ENCODE measurements at regions of chr21 and their contacts with region 1.

Region 1: DNA sequence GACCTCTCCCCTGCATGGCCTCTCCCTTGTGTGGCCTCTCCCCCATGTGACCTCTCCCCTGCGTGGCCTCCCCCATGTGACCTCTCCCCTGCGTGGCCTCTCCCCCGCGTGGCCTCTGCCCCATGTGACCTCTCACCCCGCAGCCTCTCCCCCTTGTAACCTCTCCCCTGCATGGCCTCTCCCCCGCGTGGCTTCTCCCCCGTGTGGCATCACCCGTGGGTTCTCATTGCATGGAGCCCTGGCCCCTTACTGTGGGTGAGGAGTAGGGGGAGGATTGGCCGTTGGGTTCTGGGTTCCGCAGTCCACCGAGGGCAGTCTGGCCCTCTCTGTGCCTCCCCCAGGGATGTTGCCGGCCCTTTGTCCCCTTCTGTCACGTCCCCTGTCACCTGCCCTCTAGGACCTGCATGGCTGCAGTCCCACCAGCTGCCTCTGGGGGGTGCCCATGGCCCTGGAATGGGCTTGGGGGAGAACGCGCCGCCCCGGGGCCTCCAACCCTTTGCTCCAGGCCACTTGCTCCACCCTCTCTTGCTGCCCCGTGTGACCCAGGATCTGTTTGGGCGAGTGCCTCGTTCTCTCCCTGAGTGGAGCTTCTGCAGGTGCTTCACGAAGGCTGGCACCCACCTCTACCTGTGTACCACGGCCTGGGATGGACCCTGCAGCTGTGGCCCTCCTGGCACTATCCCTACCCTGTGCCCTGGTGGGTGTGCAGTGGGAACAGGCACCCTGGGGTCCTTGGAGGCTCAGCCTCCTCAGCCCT is 21.3 kb downstream of the RRP1 start:
- DNase-seq: peak; percentile 80 to 93 (median 86)
- ATAC-seq: peak; percentile 96
- H3K4me3 ChIP-seq: peak overlapping the region; percentile 22
- H3K4me3 Mint-ChIP-seq: no peak overlapping the region
- H3K27ac ChIP-seq: no peak overlapping the region
- H3K27ac Mint-ChIP-seq: peak overlapping the region; percentile 37
- H3K4me1 ChIP-seq: peaks cover 21% of the 10 kb centered on the region
- H3K4me1 Mint-ChIP-seq: peaks cover 13% of the 10 kb centered on the region
- H3K27me3 ChIP-seq: no peaks in the 10 kb centered on the region
- H3K27me3 Mint-ChIP-seq: no peaks in the 10 kb centered on the region
- CTCF ChIP-seq: peak; percentile 87

Region 2: DNA sequence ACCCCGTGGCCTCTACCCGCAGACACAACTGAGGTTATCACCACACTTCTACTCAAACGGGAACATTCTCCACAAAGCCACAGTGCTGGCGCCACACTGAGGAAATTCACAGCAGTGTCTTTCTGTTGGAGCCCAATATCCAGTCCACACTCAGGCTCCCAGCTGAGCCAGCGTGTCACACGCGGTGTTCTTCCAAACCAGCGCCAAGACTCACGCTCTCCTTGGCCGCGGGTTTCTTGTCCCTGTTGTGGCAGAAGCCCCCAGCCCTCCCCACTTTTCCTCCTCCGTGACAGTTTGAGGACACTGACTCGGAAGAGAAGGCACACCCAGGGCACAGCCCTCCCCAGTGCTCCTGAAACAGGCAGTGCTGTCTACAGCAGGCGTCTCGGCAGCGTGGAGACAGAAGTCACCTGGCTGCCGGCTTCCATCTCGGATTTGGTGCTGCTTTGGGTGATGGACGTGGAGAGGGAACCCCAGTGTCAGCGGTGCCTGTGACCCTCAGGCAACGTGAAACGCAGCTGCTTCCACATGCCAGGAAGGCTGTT is 19.0 kb after region 1 on chr21:
- CTCF ChIA-PET with region 1: no interaction called
- POLR2A ChIA-PET with region 1: no interaction called
- intact Hi-C with region 1: no loop called
- DNase-seq: no peak
- ATAC-seq: no peak
- H3K4me3 ChIP-seq: no peak overlapping the region
- H3K4me3 Mint-ChIP-seq: no peak overlapping the region
- H3K27ac ChIP-seq: no peak overlapping the region
- H3K27ac Mint-ChIP-seq: no peak overlapping the region
- H3K4me1 ChIP-seq: no peaks in the 10 kb centered on the region
- H3K4me1 Mint-ChIP-seq: no peaks in the 10 kb centered on the region
- H3K27me3 ChIP-seq: peaks cover 0 to 11% of the 10 kb centered on the region in 2 experiments
- H3K27me3 Mint-ChIP-seq: peaks cover 14% of the 10 kb centered on the region
- CTCF ChIP-seq: no peak

Region 3: GRCh38 chr21:43853851-43854772 is 43.4 kb after region 1 on chr21:
- CTCF ChIA-PET with region 1: no interaction called
- POLR2A ChIA-PET with region 1: no interaction called
- intact Hi-C with region 1: no loop called
- DNase-seq: no peak
- ATAC-seq: no peak
- H3K4me3 ChIP-seq: no peak overlapping the region
- H3K4me3 Mint-ChIP-seq: no peak overlapping the region
- H3K27ac ChIP-seq: no peak overlapping the region
- H3K27ac Mint-ChIP-seq: no peak overlapping the region
- H3K4me1 ChIP-seq: peaks cover 5% of the 10 kb centered on the region
- H3K4me1 Mint-ChIP-seq: no peaks in the 10 kb centered on the region
- H3K27me3 ChIP-seq: peaks cover 0 to 2% of the 10 kb centered on the region in 2 experiments
- H3K27me3 Mint-ChIP-seq: peaks cover 9% of the 10 kb centered on the region
- CTCF ChIP-seq: no peak

Region 4: GRCh38 chr21:43916691-43917514 is 106.2 kb after region 1 on chr21:
- CTCF ChIA-PET with region 1: interaction called, 3 read pairs
- POLR2A ChIA-PET with region 1: no interaction called
- intact Hi-C with region 1: loop called in 1 of 2 experiments (anchors 2 kb)
- DNase-seq: peak; percentile 51 to 85 (median 67)
- ATAC-seq: peak; percentile 89
- H3K4me3 ChIP-seq: peak overlapping the region; percentile 62
- H3K4me3 Mint-ChIP-seq: peak overlapping the region; percentile 85
- H3K27ac ChIP-seq: peak overlapping the region; percentile 78 to 87
- H3K27ac Mint-ChIP-seq: peak overlapping the region; percentile 95
- H3K4me1 ChIP-seq: peaks cover 42% of the 10 kb centered on the region
- H3K4me1 Mint-ChIP-seq: peaks cover 74% of the 10 kb centered on the region
- H3K27me3 ChIP-seq: no peaks in the 10 kb centered on the region
- H3K27me3 Mint-ChIP-seq: no peaks in the 10 kb centered on the region
- CTCF ChIP-seq: no peak

Region 5: DNA sequence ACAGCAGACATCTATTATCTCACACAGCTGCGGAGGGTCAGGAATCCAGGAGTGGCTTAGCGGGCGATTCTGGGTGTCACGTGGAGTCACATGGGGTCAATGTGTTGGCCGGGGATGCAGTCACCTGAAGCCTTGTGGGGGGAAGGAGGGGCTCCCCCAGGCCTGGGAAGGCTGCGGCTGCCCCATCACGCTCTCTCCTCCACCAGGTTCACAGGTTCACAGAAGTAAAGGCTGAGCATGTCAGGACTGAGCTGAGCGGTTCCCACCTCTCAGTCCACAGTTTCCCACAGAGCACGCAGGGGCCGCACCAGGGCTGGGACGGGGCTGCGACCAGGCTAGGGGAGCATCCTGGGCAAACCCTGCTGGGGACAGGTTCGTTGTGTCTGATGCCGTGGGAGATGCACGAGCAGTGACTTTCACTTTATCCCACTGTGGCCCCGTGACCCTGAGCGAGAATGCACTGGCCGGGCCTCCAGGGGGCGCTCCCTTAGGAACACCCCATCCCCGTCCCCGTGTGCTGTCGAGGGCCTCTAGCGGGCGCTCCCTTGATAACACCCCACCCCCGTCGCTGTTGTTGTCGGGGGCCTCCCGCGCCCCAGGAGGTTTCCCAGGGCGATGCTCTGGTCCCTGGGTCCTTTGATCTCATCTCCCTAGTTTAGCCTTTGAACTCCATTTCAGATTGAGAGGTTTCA is 128.2 kb after region 1 on chr21:
- CTCF ChIA-PET with region 1: interaction called, 13 read pairs
- POLR2A ChIA-PET with region 1: interaction called, 3 read pairs
- intact Hi-C with region 1: loop called (anchors 1 kb)
- DNase-seq: peak; percentile 86 to 94 (median 90)
- ATAC-seq: peak; percentile 100
- H3K4me3 ChIP-seq: peak overlapping the region; percentile 62
- H3K4me3 Mint-ChIP-seq: peak overlapping the region; percentile 88
- H3K27ac ChIP-seq: peak overlapping the region in 1 of 2 donors; percentile 12
- H3K27ac Mint-ChIP-seq: peak overlapping the region; percentile 82
- H3K4me1 ChIP-seq: peaks cover 20% of the 10 kb centered on the region
- H3K4me1 Mint-ChIP-seq: peaks cover 19% of the 10 kb centered on the region
- H3K27me3 ChIP-seq: no peaks in the 10 kb centered on the region
- H3K27me3 Mint-ChIP-seq: no peaks in the 10 kb centered on the region
- CTCF ChIP-seq: peak; percentile 99

Region 6: GRCh38 chr21:43975495-43975993 is 164.9 kb after region 1 on chr21:
- CTCF ChIA-PET with region 1: interaction called, 24 read pairs
- POLR2A ChIA-PET with region 1: interaction called, 4 read pairs
- intact Hi-C with region 1: loop called (anchors 1 kb)
- DNase-seq: peak; percentile 74 to 88 (median 80)
- ATAC-seq: peak; percentile 97
- H3K4me3 ChIP-seq: no peak overlapping the region
- H3K4me3 Mint-ChIP-seq: no peak overlapping the region
- H3K27ac ChIP-seq: no peak overlapping the region
- H3K27ac Mint-ChIP-seq: peak overlapping the region; percentile 80
- H3K4me1 ChIP-seq: peaks cover 5% of the 10 kb centered on the region
- H3K4me1 Mint-ChIP-seq: peaks cover 10% of the 10 kb centered on the region
- H3K27me3 ChIP-seq: no peaks in the 10 kb centered on the region
- H3K27me3 Mint-ChIP-seq: no peaks in the 10 kb centered on the region
- CTCF ChIP-seq: peak; percentile 90

Region 7: DNA sequence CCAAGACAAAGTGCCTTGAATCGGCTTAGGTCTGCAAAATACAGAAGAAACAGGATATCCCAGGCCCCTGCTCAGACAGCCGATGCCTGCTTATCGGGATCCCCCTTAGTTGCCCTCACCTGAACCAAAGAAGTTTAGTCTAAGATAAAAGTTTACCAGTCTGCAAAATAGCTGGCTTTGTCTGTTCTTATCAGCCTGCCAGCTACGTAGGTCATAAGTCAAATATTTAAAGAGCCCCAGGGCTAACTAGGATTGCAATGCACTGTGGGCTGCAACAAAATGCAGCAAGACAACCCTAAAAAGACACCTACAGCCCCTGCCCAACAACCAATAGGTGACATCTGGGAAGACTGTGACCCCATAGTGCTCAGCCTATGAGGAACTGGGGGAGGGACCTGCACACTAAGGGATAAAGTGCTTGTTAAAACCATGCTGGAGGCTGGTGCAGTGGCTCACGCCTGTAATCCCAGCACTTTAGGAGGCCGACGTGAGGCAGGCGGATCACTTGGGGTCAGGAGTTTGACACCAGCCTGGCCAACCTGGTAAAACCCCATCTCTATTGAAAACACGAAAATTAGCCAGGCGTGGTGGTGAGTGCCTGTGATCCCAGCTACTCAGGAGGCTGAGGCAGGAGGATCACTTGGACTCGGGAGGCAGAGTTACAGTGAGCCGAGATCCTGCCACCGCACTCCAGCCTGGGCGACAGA is 672.1 kb after region 1 on chr21:
- CTCF ChIA-PET with region 1: no interaction called
- POLR2A ChIA-PET with region 1: no interaction called
- intact Hi-C with region 1: loop called in 1 of 2 experiments (anchors 5 kb)
- DNase-seq: no peak
- ATAC-seq: no peak
- H3K4me3 ChIP-seq: no peak overlapping the region
- H3K4me3 Mint-ChIP-seq: no peak overlapping the region
- H3K27ac ChIP-seq: no peak overlapping the region
- H3K27ac Mint-ChIP-seq: no peak overlapping the region
- H3K4me1 ChIP-seq: peaks cover 14% of the 10 kb centered on the region
- H3K4me1 Mint-ChIP-seq: peaks cover 10% of the 10 kb centered on the region
- H3K27me3 ChIP-seq: no peaks in the 10 kb centered on the region
- H3K27me3 Mint-ChIP-seq: no peaks in the 10 kb centered on the region
- CTCF ChIP-seq: no peak